Sciatic nerve (tissue), 2 donors: ENCODE measurements at regions of chr2 and their contacts with region 1.

Region 1: GRCh38 chr2:42886921-42887320 is 94.5 kb upstream of the HAAO start:
- DNase-seq: no peak
- ATAC-seq: no peak

Region 2: DNA sequence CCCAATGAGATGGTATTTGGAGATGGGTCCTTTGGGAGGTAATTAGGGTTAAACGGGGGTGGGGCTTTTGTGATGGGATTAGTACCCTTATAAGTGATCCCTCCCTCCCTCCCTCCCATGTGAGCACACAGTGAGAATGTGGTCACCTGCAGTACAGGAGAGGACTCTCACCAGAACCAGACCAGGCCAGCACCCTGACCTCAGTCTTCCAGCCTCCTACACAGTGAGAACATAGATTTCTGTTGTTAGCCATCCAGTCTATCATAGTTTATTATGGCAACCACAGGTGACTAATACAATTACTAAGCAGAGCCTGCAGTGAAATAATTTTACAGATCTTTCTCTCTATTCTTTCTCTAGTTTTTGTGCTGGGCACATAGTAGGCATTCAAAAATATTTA is 976.8 kb before region 1 on chr2:
- intact Hi-C with region 1: loop called (anchors 5 kb)
- DNase-seq: no peak
- ATAC-seq: no peak

Region 3: GRCh38 chr2:42810121-42810970 is 76.6 kb before region 1 on chr2:
- intact Hi-C with region 1: no loop called
- DNase-seq: peak; percentile 98
- ATAC-seq: peak; percentile 93